ENCODE measurements at regions of chr10 and their contacts with region 1.

Region 1: GRCh38 chr10:73096449-73097304 is at the start of gene P4HA1:
- DNase-seq: peak; percentile 87
- ATAC-seq: peak; percentile 97
- H3K4me3 ChIP-seq: peak within 1 kb of the TSS; percentile 64 to 87
- H3K27ac ChIP-seq: peak within 1 kb of the TSS; percentile 88
- H3K4me1 ChIP-seq: peaks cover 14% of the 10 kb centered on the region
- H3K27me3 ChIP-seq: no peaks in the 10 kb centered on the region
- CTCF ChIP-seq: peak; percentile 95
- total RNA-seq, gene P4HA1: 58.5 TPM

Region 2: GRCh38 chr10:72925951-72926465 is 170.7 kb before region 1 on chr10:
- CTCF ChIA-PET with region 1: no interaction called
- POLR2A ChIA-PET with region 1: interaction called, 16 read pairs
- in situ Hi-C with region 1: no loop called
- intact Hi-C with region 1: no loop called
- DNase-seq: no peak
- ATAC-seq: peak; percentile 62
- H3K4me3 ChIP-seq: no peak overlapping the region
- H3K27ac ChIP-seq: no peak overlapping the region
- H3K4me1 ChIP-seq: no peaks in the 10 kb centered on the region
- H3K27me3 ChIP-seq: 0 out of 2 replicates have a peak, but pooled peaks cover 2% of the 10 kb centered on the region
- CTCF ChIP-seq: no peak

Region 3: GRCh38 chr10:73032536-73032935 is 64.1 kb before region 1 on chr10:
- CTCF ChIA-PET with region 1: no interaction called
- POLR2A ChIA-PET with region 1: interaction called, 11 read pairs
- in situ Hi-C with region 1: no loop called
- intact Hi-C with region 1: no loop called
- DNase-seq: no peak
- ATAC-seq: no peak
- H3K4me3 ChIP-seq: no peak overlapping the region
- H3K27ac ChIP-seq: no peak overlapping the region
- H3K4me1 ChIP-seq: no peaks in the 10 kb centered on the region
- H3K27me3 ChIP-seq: no peaks in the 10 kb centered on the region
- CTCF ChIP-seq: no peak

Region 4: GRCh38 chr10:73076360-73077183 is 20.1 kb before region 1 on chr10:
- CTCF ChIA-PET with region 1: interaction called, 15 read pairs
- POLR2A ChIA-PET with region 1: interaction called, 12 read pairs
- in situ Hi-C with region 1: no loop called
- intact Hi-C with region 1: no loop called
- DNase-seq: no peak
- ATAC-seq: 0 out of 2 replicates have a peak, but pooled peaks have one; percentile 51
- H3K4me3 ChIP-seq: no peak overlapping the region
- H3K27ac ChIP-seq: peak overlapping the region; percentile 25
- H3K4me1 ChIP-seq: peaks cover 5% of the 10 kb centered on the region; the same call in 1 of the 2 replicates
- H3K27me3 ChIP-seq: no peaks in the 10 kb centered on the region
- CTCF ChIP-seq: no peak

Region 5: DNA sequence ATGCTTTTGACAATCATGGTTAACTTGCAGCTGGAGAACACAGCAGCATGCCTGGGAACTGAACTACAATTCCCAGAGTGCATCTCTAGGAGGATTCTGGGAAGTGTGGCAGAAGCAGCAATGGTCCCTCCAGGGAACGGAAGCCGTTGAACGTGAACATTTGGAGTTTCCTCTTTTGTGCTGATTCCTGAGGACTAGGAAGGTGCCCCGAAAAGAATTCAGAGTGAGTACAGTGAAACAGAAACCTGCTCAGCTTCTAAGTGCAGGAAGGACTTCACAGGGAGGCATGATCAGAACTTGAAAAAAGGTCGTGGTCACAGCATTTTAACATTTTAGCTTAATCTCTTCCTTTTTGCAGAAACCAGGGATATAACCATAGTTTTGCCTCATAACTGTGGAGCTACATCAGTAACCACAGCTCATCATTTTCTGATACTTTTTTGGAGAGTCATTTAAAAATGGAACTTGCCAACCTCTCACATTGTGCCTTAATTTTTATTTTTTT is 13.7 kb after region 1 on chr10 and contains the start of gene NUDT13:
- CTCF ChIA-PET with region 1: interaction called, 6 read pairs
- POLR2A ChIA-PET with region 1: interaction called, 13 read pairs
- in situ Hi-C with region 1: no loop called
- intact Hi-C with region 1: no loop called
- DNase-seq: no peak
- ATAC-seq: peak; percentile 97
- H3K4me3 ChIP-seq: peak within 1 kb of the TSS; percentile 69 to 77
- H3K27ac ChIP-seq: peak within 1 kb of the TSS; percentile 99
- H3K4me1 ChIP-seq: peaks cover 4% of the 10 kb centered on the region
- H3K27me3 ChIP-seq: no peaks in the 10 kb centered on the region
- CTCF ChIP-seq: no peak
- total RNA-seq, gene NUDT13: 6.1 TPM

Region 6: DNA sequence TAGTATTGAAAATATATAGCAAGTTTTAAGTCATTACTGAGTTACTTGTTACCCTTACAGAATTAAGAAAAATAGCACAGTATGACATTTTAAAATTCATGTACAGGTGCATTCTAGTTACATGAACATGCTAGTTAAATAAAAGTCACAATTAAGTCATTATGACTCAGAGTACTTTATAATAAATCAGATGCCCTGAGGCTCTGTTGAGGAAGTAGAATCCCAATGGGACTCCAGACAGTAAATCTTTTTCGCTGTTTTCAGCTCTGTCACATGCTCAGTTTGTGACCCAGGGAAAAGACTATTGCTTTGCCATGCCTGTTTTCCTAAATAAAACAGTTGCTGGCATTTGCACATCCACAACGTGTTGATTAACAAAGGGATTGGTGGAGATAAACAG is 34.6 kb after region 1 on chr10:
- CTCF ChIA-PET with region 1: no interaction called
- POLR2A ChIA-PET with region 1: no interaction called
- in situ Hi-C with region 1: no loop called
- intact Hi-C with region 1: no loop called
- DNase-seq: no peak
- ATAC-seq: peak; percentile 58; the same call in 1 of the 2 replicates
- H3K4me3 ChIP-seq: no peak overlapping the region
- H3K27ac ChIP-seq: no peak overlapping the region
- H3K4me1 ChIP-seq: peaks cover 10% of the 10 kb centered on the region
- H3K27me3 ChIP-seq: no peaks in the 10 kb centered on the region
- CTCF ChIP-seq: no peak

Region 7: DNA sequence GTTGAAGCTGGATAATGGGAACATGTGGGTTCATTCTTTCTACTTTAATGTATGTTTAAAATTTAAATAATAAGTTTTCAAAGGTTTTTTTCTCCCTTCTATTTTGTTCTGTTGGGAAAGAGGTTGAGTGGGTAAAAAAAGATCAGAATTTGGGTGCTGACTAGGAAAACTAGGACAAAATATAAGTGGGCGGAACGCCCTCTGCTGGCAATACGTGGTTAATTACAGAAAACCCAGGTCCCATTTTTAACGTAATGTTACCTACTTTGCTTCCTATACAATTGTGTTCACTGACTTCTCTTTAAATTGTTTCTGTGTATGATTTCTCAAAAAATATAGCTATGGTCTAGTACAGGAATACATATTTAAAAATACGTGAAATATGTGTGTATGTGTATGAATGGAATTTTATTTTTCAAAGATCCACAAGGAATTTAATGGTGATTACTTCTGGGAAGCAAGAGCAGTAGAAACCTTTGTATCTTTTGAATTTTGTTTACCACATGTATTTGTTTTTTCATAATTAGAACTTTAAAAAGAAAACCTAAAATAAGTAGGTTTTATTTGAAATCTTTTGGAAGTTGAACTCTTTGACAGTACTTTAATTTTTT is 62.5 kb after region 1 on chr10:
- CTCF ChIA-PET with region 1: interaction called, 3 read pairs
- POLR2A ChIA-PET with region 1: no interaction called
- in situ Hi-C with region 1: no loop called
- intact Hi-C with region 1: loop called (anchors 2 kb)
- DNase-seq: peak; percentile 25
- ATAC-seq: no peak
- H3K4me3 ChIP-seq: no peak overlapping the region
- H3K27ac ChIP-seq: no peak overlapping the region
- H3K4me1 ChIP-seq: 0 out of 2 replicates have a peak, but pooled peaks cover 4% of the 10 kb centered on the region
- H3K27me3 ChIP-seq: no peaks in the 10 kb centered on the region
- CTCF ChIP-seq: peak; percentile 88; the same call in 1 of the 2 replicates

Measured in Panc1 (cell line).